PC-9 (cell line): ENCODE measurements at regions of chr3 and their contacts with region 1.

Region 1: GRCh38 chr3:142226484-142226883 is 1.1 kb upstream of the GK5 start:
- DNase-seq: no peak
- H3K4me3 ChIP-seq: no peak overlapping the region
- H3K27ac ChIP-seq: no peak overlapping the region
- H3K4me1 ChIP-seq: peaks cover 10% of the 10 kb centered on the region
- H3K27me3 ChIP-seq: no peaks in the 10 kb centered on the region
- CTCF ChIP-seq: no peak; the same call in 1 of the 2 replicates

Region 2: GRCh38 chr3:142117056-142117851 is 109.2 kb before region 1 on chr3:
- CTCF ChIA-PET with region 1: no interaction called
- POLR2A ChIA-PET with region 1: no interaction called
- intact Hi-C with region 1: loop called (anchors 5 kb)
- DNase-seq: peak; percentile 61 to 91
- H3K4me3 ChIP-seq: no peak overlapping the region
- H3K27ac ChIP-seq: no peak overlapping the region
- H3K4me1 ChIP-seq: peaks cover 30% of the 10 kb centered on the region
- H3K27me3 ChIP-seq: no peaks in the 10 kb centered on the region
- CTCF ChIP-seq: no peak

Region 3: DNA sequence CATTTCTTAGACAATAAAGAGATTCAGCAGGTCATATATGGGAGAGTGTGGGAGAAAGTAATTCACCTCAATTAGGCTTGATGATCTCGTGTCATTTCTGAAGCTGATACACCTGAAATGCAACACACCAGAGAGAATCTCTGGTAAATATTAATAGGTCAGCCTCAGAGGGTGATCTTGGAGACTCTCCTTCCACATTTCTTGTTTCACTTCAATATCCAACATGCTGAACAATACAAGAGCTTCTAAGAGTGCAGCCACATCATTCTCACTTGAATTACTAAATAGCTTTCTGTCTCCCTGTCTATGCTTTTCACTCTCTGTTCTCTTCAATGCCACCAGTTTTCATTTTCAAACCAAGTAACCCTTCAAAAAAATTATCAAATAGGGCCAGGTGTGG is 70.0 kb after region 1 on chr3:
- CTCF ChIA-PET with region 1: no interaction called
- POLR2A ChIA-PET with region 1: no interaction called
- intact Hi-C with region 1: no loop called
- DNase-seq: no peak
- H3K4me3 ChIP-seq: no peak overlapping the region
- H3K27ac ChIP-seq: no peak overlapping the region
- H3K4me1 ChIP-seq: no peaks in the 10 kb centered on the region
- H3K27me3 ChIP-seq: no peaks in the 10 kb centered on the region
- CTCF ChIP-seq: no peak